Ascending aorta (tissue), 2 donors: ENCODE measurements at regions of chr3 and their contacts with region 1.

Region 1: GRCh38 chr3:17431004-17431403 is 311.4 kb downstream of the TBC1D5 start:
- DNase-seq: no peak
- H3K4me3 ChIP-seq: no peak overlapping the region
- H3K27ac ChIP-seq: no peak overlapping the region
- H3K4me1 ChIP-seq: peaks cover 0 to 8% of the 10 kb centered on the region in 2 donors
- H3K27me3 ChIP-seq: no peaks in the 10 kb centered on the region
- CTCF ChIP-seq: peak; percentile 36 to 58 (median 54)

Region 2: DNA sequence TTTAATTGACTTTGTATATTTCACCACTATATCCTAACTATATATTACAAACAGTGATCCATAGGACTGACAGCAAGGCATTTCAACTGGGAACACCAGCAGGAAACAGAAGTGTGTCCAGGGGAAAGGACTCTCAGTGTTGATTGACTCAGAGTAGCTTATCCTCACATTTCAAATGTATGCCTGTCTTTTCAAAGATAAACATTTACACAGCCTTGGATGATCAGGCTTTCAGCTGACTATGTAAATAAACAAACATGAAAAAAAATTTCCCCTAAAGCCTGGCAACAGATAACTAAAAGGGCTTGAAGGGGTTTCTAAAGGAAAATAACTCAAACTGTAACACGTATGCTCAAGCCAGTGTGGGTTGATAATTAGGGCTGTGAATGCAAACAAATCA is 10.3 kb before region 1 on chr3:
- intact Hi-C with region 1: no loop called
- DNase-seq: no peak
- H3K4me3 ChIP-seq: no peak overlapping the region
- H3K27ac ChIP-seq: no peak overlapping the region
- H3K4me1 ChIP-seq: no peaks in the 10 kb centered on the region
- H3K27me3 ChIP-seq: no peaks in the 10 kb centered on the region
- CTCF ChIP-seq: no peak

Region 3: DNA sequence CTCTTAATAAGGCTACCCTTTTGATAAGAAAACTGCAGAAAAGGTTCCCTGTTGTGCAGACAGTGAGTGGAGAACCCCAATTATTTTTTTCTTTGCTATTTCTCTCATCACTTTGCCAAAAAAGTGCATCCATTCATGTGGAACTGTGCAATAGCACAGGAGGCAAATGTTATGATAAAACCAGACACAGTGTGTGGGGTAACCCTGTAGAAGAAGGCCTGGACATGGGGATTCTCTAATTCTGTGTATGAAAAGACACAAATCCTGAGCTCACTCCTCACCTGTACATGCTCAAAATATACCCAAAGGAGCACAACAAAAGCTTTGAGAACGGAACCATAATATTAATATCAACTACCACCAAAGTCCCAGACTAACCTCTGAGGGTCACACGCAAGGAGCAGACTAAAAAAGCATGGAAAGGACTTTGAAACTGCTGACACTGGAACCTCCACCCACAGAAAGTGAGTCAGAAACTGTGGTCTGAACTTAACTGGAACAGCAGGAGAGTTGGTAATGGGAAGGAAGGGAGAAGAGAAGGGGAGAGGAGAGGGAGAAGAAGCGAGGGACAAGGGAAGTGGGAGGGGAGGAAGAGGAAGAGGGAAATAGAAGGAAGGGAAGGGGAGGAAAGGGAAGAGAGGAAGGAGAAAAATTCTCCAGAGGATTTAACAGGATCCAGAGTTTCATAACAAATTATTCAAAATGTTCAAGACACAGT is 11.5 kb after region 1 on chr3:
- intact Hi-C with region 1: no loop called
- DNase-seq: no peak
- H3K4me3 ChIP-seq: no peak overlapping the region
- H3K27ac ChIP-seq: no peak overlapping the region
- H3K4me1 ChIP-seq: no peaks in the 10 kb centered on the region
- H3K27me3 ChIP-seq: no peaks in the 10 kb centered on the region
- CTCF ChIP-seq: no peak

Region 4: DNA sequence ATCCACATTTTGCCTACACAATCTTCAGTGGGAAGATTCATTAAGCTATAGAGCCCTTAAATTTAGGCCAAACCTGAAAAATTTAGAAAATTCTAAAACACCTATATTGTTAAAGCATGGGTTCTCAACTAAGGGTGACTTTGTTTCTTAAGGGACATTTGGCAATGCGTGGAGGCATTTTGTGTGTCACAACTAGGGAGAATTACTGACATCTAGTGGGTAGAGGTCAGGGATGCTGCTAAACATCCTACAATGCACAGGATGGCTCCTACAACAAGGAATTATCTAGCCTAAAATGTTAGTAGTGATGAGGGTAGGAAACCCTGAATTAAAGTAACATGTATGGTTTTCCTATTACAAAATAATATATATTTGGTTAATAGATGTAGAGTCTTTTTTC is 255.6 kb after region 1 on chr3:
- intact Hi-C with region 1: loop called (anchors 5 kb)
- DNase-seq: no peak
- H3K4me3 ChIP-seq: no peak overlapping the region
- H3K27ac ChIP-seq: no peak overlapping the region
- H3K4me1 ChIP-seq: peaks cover 0 to 5% of the 10 kb centered on the region in 2 donors
- H3K27me3 ChIP-seq: no peaks in the 10 kb centered on the region
- CTCF ChIP-seq: peak in 2 of 3 experiments; percentile 6 to 25

Region 5: GRCh38 chr3:17742108-17742879 is 311.3 kb after region 1 on chr3 and contains the start of gene TBC1D5:
- intact Hi-C with region 1: loop called (anchors 5 kb)
- DNase-seq: peak; percentile 87 to 98
- H3K4me3 ChIP-seq: peak within 1 kb of the TSS; percentile 68 to 96
- H3K27ac ChIP-seq: peak within 1 kb of the TSS; percentile 93 to 98
- H3K4me1 ChIP-seq: peaks cover 2 to 17% of the 10 kb centered on the region in 2 donors
- H3K27me3 ChIP-seq: no peaks in the 10 kb centered on the region
- CTCF ChIP-seq: peak in 1 of 3 experiments; percentile 11
- total RNA-seq, gene TBC1D5: 43.3 TPM

Region 6: GRCh38 chr3:17841190-17841828 is 410.3 kb after region 1 on chr3:
- intact Hi-C with region 1: loop called (anchors 1 kb)
- DNase-seq: peak in 1 of 2 donors; percentile 78
- H3K4me3 ChIP-seq: no peak overlapping the region
- H3K27ac ChIP-seq: no peak overlapping the region
- H3K4me1 ChIP-seq: no peaks in the 10 kb centered on the region
- H3K27me3 ChIP-seq: no peaks in the 10 kb centered on the region
- CTCF ChIP-seq: peak; percentile 83 to 97 (median 92)